ENCODE measurements at regions of chr17 and their contacts with region 1.

Region 1: DNA sequence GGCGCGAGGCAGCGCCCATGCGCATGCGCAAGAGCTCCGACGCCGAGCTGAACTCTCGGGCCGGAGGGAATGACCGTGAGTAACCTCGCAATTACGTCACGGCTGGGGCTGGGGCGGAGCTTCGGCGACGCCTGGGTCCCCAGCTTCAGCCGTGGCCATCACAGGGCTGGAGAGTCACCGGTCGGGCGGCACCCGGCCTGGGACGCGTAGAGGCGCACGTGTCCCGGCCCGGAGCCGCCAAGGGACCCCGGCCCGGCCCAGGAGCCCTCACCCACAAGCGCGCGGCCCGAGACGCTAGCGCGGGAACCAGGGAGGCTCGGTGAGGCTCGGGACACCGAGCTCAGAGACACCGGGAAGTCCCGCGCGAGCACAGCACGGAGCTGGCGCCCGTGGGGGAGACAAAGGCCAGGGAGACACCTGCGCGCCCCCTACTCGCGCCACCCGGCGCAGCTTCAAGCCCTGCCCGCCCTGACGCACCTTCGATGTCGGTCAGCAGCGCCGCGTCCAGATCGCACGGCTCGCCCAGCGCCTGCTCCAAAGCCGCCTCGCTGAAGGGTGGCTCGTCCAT is 452 bp downstream of the SREBF1 start:
- DNase-seq: peak; percentile 74 to 97 (median 85)
- ATAC-seq: peak; percentile 71
- H3K4me3 ChIP-seq: peak overlapping the region; percentile 94
- H3K27ac ChIP-seq: peak overlapping the region; percentile 100
- H3K4me1 ChIP-seq: peaks cover 57 to 69% of the 10 kb centered on the region in 2 experiments
- H3K27me3 ChIP-seq: no peaks in the 10 kb centered on the region
- CTCF ChIP-seq: no peak
- EP300 ChIP-seq: no peak; the same call in 1 of the 2 replicates
- POLR2A ChIP-seq: peak; percentile 93
- RAD21 ChIP-seq: no peak

Region 2: GRCh38 chr17:17561408-17562145 is 274.8 kb before region 1 on chr17:
- CTCF ChIA-PET with region 1: no interaction called
- POLR2A ChIA-PET with region 1: no interaction called
- in situ Hi-C with region 1: no loop called
- intact Hi-C with region 1: no loop called
- DNase-seq: no peak
- ATAC-seq: no peak
- H3K4me3 ChIP-seq: no peak overlapping the region
- H3K27ac ChIP-seq: no peak overlapping the region
- H3K4me1 ChIP-seq: peaks cover 0 to 4% of the 10 kb centered on the region in 2 experiments; a peak in 1 of 5 replicates
- H3K27me3 ChIP-seq: no peaks in the 10 kb centered on the region
- CTCF ChIP-seq: no peak
- EP300 ChIP-seq: no peak
- POLR2A ChIP-seq: no peak
- RAD21 ChIP-seq: no peak

Region 3: DNA sequence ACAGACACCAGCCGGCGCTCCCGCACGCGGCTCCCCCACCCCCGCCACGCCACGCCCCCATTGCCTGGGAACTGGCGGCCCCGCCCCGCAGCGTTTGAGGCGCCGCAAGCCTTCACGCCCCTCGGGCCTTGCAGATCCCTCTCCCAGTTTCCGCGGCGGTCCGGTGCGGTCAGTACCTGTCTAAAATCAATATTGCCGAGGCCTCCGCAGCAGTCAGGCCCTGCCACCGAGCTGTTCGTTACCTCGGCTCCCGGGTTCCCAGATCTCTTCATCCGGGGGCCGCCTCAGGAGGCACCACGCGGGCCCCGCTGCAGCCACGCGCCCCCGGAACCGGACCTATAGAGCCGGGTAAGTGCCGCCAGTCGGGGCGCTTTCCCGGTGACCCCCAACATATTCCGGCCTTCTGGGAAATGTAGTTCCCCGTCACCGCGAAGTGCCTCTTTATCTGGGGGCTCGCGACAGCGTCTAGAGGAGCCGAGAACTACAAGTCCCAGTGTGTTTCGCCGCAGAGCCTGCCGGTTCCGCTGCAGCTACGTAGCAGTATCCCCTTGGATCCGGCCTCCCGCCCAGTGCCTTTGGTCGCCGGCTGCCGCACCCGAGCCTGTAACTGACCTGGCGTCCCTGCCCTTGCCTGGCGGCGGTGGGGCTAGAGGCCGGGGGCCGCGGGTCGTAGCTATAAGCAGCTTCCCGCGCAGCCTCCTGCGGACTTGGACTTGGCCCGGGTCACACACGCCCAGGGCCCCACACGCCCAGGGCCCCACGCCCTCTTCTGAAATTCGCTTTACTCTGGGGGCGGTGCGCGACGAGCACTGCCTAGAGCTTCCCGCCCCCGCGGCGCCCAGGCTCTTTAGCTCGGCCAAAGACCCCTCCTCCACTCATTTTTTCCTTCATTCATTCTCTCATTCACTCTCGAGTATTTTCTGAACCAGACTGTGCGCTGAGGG is 244.7 kb before region 1 on chr17 and contains the start of gene PEMT:
- CTCF ChIA-PET with region 1: no interaction called
- POLR2A ChIA-PET with region 1: no interaction called
- in situ Hi-C with region 1: no loop called
- intact Hi-C with region 1: no loop called
- DNase-seq: peak; percentile 84 to 96 (median 86)
- ATAC-seq: peak; percentile 97
- H3K4me3 ChIP-seq: peak within 1 kb of the TSS; percentile 79
- H3K27ac ChIP-seq: peak within 1 kb of the TSS; percentile 91
- H3K4me1 ChIP-seq: peaks cover 10 to 28% of the 10 kb centered on the region in 2 experiments; a peak in 4 of 5 replicates
- H3K27me3 ChIP-seq: no peaks in the 10 kb centered on the region
- CTCF ChIP-seq: no peak
- EP300 ChIP-seq: no peak
- POLR2A ChIP-seq: peak; percentile 87
- RAD21 ChIP-seq: no peak
- polyA plus RNA-seq, gene PEMT: 1.4 to 7.9 TPM

Region 4: GRCh38 chr17:17823433-17824118 is 12.8 kb before region 1 on chr17:
- CTCF ChIA-PET with region 1: no interaction called
- POLR2A ChIA-PET with region 1: interaction called, 102 read pairs
- in situ Hi-C with region 1: no loop called
- intact Hi-C with region 1: loop called (anchors 2 kb)
- DNase-seq: peak; percentile 89 to 98 (median 94)
- ATAC-seq: peak; percentile 86
- H3K4me3 ChIP-seq: peak overlapping the region; percentile 52
- H3K27ac ChIP-seq: peak overlapping the region; percentile 99
- H3K4me1 ChIP-seq: peaks cover 82 to 88% of the 10 kb centered on the region in 2 experiments
- H3K27me3 ChIP-seq: no peaks in the 10 kb centered on the region
- CTCF ChIP-seq: no peak
- EP300 ChIP-seq: no peak; the same call in none of the 2 replicates
- POLR2A ChIP-seq: no peak; the same call in 1 of the 2 replicates
- RAD21 ChIP-seq: no peak

Region 5: DNA sequence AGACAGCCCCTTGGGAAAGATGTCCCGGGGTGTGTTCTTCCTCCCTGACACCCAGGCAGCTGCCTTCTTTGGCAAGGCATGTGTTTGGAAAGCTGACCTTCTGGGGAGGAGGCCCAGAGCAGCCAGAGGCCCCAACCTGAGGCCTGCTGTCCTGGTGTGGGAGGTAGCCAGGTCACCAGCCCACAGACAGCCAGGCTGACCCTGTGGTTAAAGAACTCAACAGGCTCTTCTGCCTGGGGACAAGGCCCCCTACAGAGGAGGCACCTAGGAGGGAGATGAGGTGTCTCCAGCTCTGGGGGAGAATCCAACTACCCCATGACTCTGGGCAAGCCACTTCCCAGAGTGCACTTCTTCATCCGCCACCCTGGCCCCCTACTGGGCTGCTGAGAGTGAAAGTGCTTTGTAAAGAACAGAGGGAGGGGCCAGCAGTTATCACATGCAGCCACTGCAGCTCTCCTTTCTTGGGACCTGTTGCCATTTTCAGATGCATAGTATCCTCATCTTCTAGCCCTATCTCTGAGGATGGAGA is 13.6 kb after region 1 on chr17:
- CTCF ChIA-PET with region 1: no interaction called
- POLR2A ChIA-PET with region 1: interaction called, 39 read pairs
- in situ Hi-C with region 1: no loop called
- intact Hi-C with region 1: loop called (anchors 2 kb)
- DNase-seq: peak; percentile 70 to 92 (median 77)
- ATAC-seq: peak; percentile 95
- H3K4me3 ChIP-seq: no peak overlapping the region
- H3K27ac ChIP-seq: peak overlapping the region; percentile 94
- H3K4me1 ChIP-seq: peaks cover 40 to 67% of the 10 kb centered on the region in 2 experiments
- H3K27me3 ChIP-seq: no peaks in the 10 kb centered on the region
- CTCF ChIP-seq: peak; percentile 13 to 53 (median 29); a peak in 3 of 6 replicates
- EP300 ChIP-seq: peak; percentile 56
- POLR2A ChIP-seq: peak; percentile 60; the same call in 1 of the 2 replicates
- RAD21 ChIP-seq: peak in 1 of 2 experiments; percentile 28; a peak in 1 of 4 replicates

Region 6: DNA sequence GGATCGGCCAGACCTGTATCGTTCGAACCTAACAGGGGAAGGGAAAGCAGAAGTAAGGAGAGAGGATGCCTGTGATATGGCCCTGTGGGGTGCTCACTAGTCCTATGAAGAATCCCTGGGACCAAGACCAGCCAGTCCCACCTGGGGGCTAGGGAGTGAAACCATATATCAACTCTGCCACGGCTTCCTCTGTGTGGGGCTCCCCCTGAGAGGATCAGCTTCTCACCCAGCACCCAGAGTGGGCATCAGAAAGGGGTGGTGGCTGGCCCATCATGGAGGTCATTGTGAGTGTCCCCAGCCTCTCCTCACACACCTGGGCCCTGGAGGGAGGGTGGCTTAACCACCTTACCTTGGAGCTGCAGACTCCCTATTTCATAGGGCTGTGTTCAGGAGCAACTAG is 30.6 kb after region 1 on chr17:
- CTCF ChIA-PET with region 1: no interaction called
- POLR2A ChIA-PET with region 1: no interaction called
- in situ Hi-C with region 1: no loop called
- intact Hi-C with region 1: no loop called
- DNase-seq: no peak
- ATAC-seq: no peak
- H3K4me3 ChIP-seq: no peak overlapping the region
- H3K27ac ChIP-seq: no peak overlapping the region
- H3K4me1 ChIP-seq: peaks cover 0 to 3% of the 10 kb centered on the region in 2 experiments; a peak in 1 of 5 replicates
- H3K27me3 ChIP-seq: no peaks in the 10 kb centered on the region
- CTCF ChIP-seq: no peak
- EP300 ChIP-seq: no peak
- POLR2A ChIP-seq: no peak
- RAD21 ChIP-seq: no peak